CD8-positive, alpha-beta T cell (primary cell): ENCODE measurements at regions of chr16 and their contacts with region 1.

Region 1: GRCh38 chr16:8567750-8568617 is 22.3 kb downstream of the TMEM114 start:
- DNase-seq: peak; percentile 49 to 86 (median 73)
- ATAC-seq: peak; percentile 97
- H3K4me3 ChIP-seq: no peak overlapping the region
- H3K4me3 Mint-ChIP-seq: no peak overlapping the region
- H3K27ac ChIP-seq: no peak overlapping the region
- H3K27ac Mint-ChIP-seq: no peak overlapping the region
- H3K4me1 ChIP-seq: no peaks in the 10 kb centered on the region
- H3K4me1 Mint-ChIP-seq: peaks cover 4% of the 10 kb centered on the region
- H3K27me3 ChIP-seq: no peaks in the 10 kb centered on the region
- H3K27me3 Mint-ChIP-seq: peaks cover 10% of the 10 kb centered on the region
- CTCF ChIP-seq: peak; percentile 98

Region 2: DNA sequence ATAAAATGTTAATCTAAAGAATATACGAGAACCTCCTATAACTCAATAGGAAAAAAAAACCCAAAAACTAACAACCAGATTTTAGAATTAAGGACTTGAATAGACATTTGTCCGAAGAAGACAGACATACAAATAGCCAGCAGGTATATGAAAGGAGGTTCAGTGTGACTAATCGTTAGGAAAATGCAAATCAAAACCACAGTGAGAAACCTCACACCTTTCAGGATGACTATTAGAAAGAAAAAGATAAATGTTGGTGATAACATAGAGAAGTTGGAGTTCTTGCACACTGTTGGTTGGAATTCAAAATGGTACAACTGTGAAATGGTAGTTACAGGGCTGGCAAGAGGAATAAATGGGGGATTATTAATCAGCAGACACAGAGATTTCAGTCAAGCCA is 316.7 kb before region 1 on chr16:
- CTCF ChIA-PET with region 1: no interaction called
- POLR2A ChIA-PET with region 1: no interaction called
- intact Hi-C with region 1: no loop called
- DNase-seq: no peak
- ATAC-seq: no peak
- H3K4me3 ChIP-seq: no peak overlapping the region
- H3K4me3 Mint-ChIP-seq: no peak overlapping the region
- H3K27ac ChIP-seq: no peak overlapping the region
- H3K27ac Mint-ChIP-seq: no peak overlapping the region
- H3K4me1 ChIP-seq: no peaks in the 10 kb centered on the region
- H3K4me1 Mint-ChIP-seq: no peaks in the 10 kb centered on the region
- H3K27me3 ChIP-seq: no peaks in the 10 kb centered on the region
- H3K27me3 Mint-ChIP-seq: no peaks in the 10 kb centered on the region
- CTCF ChIP-seq: no peak

Region 3: GRCh38 chr16:8621572-8622314 is 53.8 kb after region 1 on chr16 and contains the start of gene METTL22:
- CTCF ChIA-PET with region 1: no interaction called
- POLR2A ChIA-PET with region 1: no interaction called
- intact Hi-C with region 1: loop called (anchors 5 kb)
- DNase-seq: peak; percentile 83 to 96 (median 91)
- ATAC-seq: peak; percentile 98
- H3K4me3 ChIP-seq: peak within 1 kb of the TSS; percentile 90 to 100
- H3K4me3 Mint-ChIP-seq: peak within 1 kb of the TSS; percentile 94
- H3K27ac ChIP-seq: peak within 1 kb of the TSS; percentile 83 to 84
- H3K27ac Mint-ChIP-seq: peak within 1 kb of the TSS; percentile 92
- H3K4me1 ChIP-seq: peaks cover 11% of the 10 kb centered on the region
- H3K4me1 Mint-ChIP-seq: peaks cover 20% of the 10 kb centered on the region
- H3K27me3 ChIP-seq: no peaks in the 10 kb centered on the region
- H3K27me3 Mint-ChIP-seq: no peaks in the 10 kb centered on the region
- CTCF ChIP-seq: no peak
- total RNA-seq, gene METTL22: 30.0 to 30.8 TPM

Region 4: DNA sequence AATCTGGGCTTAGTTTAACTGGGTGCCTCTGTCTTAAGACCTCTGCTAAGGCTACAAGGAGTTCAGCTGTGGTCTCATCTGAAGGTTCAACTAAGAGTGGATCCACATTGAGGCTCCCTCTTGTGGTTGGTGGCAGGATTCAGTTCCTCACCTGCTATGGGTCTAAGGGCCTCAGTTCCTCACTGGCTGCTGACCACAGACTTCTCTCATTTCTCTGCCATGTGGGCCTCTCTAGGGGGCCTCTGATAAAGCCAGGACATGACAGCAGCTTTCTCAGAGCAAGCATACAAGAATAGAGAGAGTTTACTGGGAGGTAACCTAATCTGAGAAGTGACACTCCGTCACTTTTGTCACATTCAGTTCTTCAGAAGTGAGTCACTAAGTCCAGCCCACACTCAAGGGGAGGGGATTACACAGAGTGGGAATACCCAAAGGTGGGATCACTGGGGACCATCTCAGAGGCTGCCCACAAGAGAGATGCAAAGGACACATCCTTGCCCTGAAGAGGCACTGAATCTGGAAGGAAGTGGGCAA is 87.3 kb after region 1 on chr16:
- CTCF ChIA-PET with region 1: no interaction called
- POLR2A ChIA-PET with region 1: no interaction called
- intact Hi-C with region 1: loop called (anchors 5 to 10 kb)
- DNase-seq: peak in 2 of 9 experiments; percentile 24 to 35
- ATAC-seq: no peak
- H3K4me3 ChIP-seq: no peak overlapping the region
- H3K4me3 Mint-ChIP-seq: no peak overlapping the region
- H3K27ac ChIP-seq: no peak overlapping the region
- H3K27ac Mint-ChIP-seq: no peak overlapping the region
- H3K4me1 ChIP-seq: no peaks in the 10 kb centered on the region
- H3K4me1 Mint-ChIP-seq: no peaks in the 10 kb centered on the region
- H3K27me3 ChIP-seq: no peaks in the 10 kb centered on the region
- H3K27me3 Mint-ChIP-seq: no peaks in the 10 kb centered on the region
- CTCF ChIP-seq: no peak

Region 5: DNA sequence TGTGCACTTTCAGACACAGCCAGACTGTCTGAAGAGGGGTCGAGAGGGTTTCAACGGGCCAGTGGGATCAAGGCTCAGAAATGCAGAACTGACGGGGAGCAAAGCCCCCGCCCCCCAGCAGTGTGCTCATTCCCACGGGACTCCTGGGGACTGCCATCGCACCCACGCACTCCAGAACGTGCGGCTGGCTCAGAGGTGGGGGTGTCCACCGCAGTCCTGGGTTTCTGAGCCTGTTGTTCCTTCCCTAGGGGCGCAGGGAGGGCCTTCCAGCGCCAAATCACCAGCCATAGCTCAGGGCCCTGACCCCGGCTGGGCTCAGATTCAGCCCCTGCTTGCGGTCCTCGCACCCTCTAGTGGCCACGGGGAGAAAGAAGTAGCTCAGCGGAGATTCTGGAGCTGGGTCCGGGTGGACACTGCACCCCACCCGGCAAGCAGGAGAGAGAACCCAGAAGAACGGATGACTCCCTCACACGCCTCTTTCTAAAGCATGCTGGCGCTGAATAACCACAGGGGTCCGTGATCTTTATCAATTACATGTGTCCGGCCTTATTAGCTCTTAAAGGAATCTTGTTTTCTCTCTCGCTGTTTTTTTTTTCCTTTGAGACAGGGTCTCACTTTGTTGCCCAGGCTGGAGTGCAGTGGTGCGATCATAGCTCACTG is 440.7 kb after region 1 on chr16:
- CTCF ChIA-PET with region 1: interaction called, 16 read pairs
- POLR2A ChIA-PET with region 1: interaction called, 3 read pairs
- intact Hi-C with region 1: loop called (anchors 1 to 5 kb)
- DNase-seq: peak; percentile 44 to 78 (median 69)
- ATAC-seq: peak; percentile 84
- H3K4me3 ChIP-seq: no peak overlapping the region
- H3K4me3 Mint-ChIP-seq: peak overlapping the region; percentile 29
- H3K27ac ChIP-seq: no peak overlapping the region
- H3K27ac Mint-ChIP-seq: no peak overlapping the region
- H3K4me1 ChIP-seq: peaks cover 9% of the 10 kb centered on the region
- H3K4me1 Mint-ChIP-seq: peaks cover 3% of the 10 kb centered on the region
- H3K27me3 ChIP-seq: peaks cover 0 to 3% of the 10 kb centered on the region in 2 experiments
- H3K27me3 Mint-ChIP-seq: peaks cover 21% of the 10 kb centered on the region
- CTCF ChIP-seq: peak; percentile 73

Region 6: GRCh38 chr16:10181196-10182162 is 1613.5 kb after region 1 on chr16:
- CTCF ChIA-PET with region 1: no interaction called
- POLR2A ChIA-PET with region 1: no interaction called
- intact Hi-C with region 1: loop called in 1 of 2 experiments (anchors 2 kb)
- DNase-seq: peak in 5 of 9 experiments; percentile 11 to 37 (median 19)
- ATAC-seq: no peak
- H3K4me3 ChIP-seq: no peak overlapping the region
- H3K4me3 Mint-ChIP-seq: no peak overlapping the region
- H3K27ac ChIP-seq: no peak overlapping the region
- H3K27ac Mint-ChIP-seq: no peak overlapping the region
- H3K4me1 ChIP-seq: no peaks in the 10 kb centered on the region
- H3K4me1 Mint-ChIP-seq: peaks cover 12% of the 10 kb centered on the region
- H3K27me3 ChIP-seq: peaks cover 0 to 13% of the 10 kb centered on the region in 2 experiments
- H3K27me3 Mint-ChIP-seq: peaks cover 56% of the 10 kb centered on the region
- CTCF ChIP-seq: no peak